Activated CD4-positive, alpha-beta memory T cell treated with anti-CD3 and anti-CD28 coated beads, Interleukin-2, amount 10 ng/mL, durations not matched to agents 7 days and 5 days (primary cell): ENCODE measurements at regions of chr19 and their contacts with region 1.

Region 1: GRCh38 chr19:48965040-48965805 is at the start of gene FTL:
- DNase-seq: peak; percentile 92
- H3K4me3 Mint-ChIP-seq: peak within 1 kb of the TSS; percentile 92
- H3K27ac Mint-ChIP-seq: peak within 1 kb of the TSS; percentile 94
- H3K4me1 Mint-ChIP-seq: peaks cover 72% of the 10 kb centered on the region
- H3K27me3 Mint-ChIP-seq: no peaks in the 10 kb centered on the region
- total RNA-seq, gene FTL: 1,110 to 1,123 TPM

Region 2: GRCh38 chr19:48954595-48955310 is 10.5 kb before region 1 on chr19 and contains the start of gene BAX:
- CTCF ChIA-PET with region 1: interaction called, 6 read pairs
- POLR2A ChIA-PET with region 1: interaction called, 38 read pairs
- DNase-seq: peak; percentile 96
- H3K4me3 Mint-ChIP-seq: peak within 1 kb of the TSS; percentile 78
- H3K27ac Mint-ChIP-seq: peak within 1 kb of the TSS; percentile 90
- H3K4me1 Mint-ChIP-seq: peaks cover 44% of the 10 kb centered on the region
- H3K27me3 Mint-ChIP-seq: no peaks in the 10 kb centered on the region
- total RNA-seq, gene BAX: 255 to 258 TPM

Region 3: GRCh38 chr19:48975947-48976847 is 11.0 kb after region 1 on chr19:
- CTCF ChIA-PET with region 1: interaction called, 10 read pairs
- POLR2A ChIA-PET with region 1: interaction called, 11 read pairs
- DNase-seq: peak; percentile 48
- H3K4me3 Mint-ChIP-seq: no peak overlapping the region
- H3K27ac Mint-ChIP-seq: no peak overlapping the region
- H3K4me1 Mint-ChIP-seq: peaks cover 6% of the 10 kb centered on the region
- H3K27me3 Mint-ChIP-seq: no peaks in the 10 kb centered on the region

Region 4: DNA sequence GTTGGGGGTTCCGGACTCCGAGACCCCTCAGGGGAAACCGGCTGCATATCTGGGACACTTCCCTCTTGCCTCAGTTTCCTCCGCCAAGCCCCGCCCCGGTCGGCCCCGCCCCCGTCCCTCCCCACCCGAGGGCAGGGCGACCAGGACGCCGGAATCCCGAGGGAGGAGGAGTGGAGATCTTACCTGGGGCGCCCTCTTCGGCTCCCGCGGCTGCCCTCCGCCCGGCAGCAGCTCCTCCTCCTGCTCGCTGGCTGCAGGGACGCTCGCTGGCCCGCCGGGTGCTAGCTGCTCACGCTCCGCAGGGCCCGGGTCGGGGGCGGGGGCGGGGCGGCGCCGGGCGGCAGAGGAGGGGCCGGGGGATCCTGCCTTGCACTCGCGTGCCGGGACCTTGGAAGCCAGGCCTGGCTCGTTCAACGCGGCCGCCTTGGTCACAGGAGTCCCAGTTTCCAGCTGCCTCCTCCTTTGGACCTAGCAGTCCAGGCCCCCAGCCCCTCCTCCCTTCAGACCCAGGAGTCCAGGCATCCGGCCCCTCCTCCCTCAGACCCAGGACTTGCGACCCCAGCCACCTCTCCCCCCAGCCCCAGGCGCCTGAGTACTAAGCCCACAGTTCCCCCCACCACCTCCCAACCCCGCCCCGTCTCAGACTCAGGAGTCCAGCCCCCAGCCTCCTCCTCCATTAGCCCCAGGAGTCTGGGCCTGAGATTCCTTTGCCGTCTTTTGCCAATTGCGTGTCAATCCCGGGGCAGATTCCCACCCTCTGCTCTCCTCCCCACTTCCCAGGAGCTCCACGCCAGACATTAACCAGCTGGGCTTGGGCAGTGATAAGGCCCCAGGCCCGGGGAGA is 99.8 kb after region 1 on chr19 and contains the start of gene NTF4:
- CTCF ChIA-PET with region 1: no interaction called
- POLR2A ChIA-PET with region 1: no interaction called
- DNase-seq: no peak
- H3K4me3 Mint-ChIP-seq: no peak within 1 kb of the TSS
- H3K27ac Mint-ChIP-seq: no peak within 1 kb of the TSS
- H3K4me1 Mint-ChIP-seq: no peaks in the 10 kb centered on the region
- H3K27me3 Mint-ChIP-seq: peaks cover 57% of the 10 kb centered on the region
- total RNA-seq, gene NTF4: not detected